ENCODE measurements at regions of chr13 and their contacts with region 1.

Region 1: DNA sequence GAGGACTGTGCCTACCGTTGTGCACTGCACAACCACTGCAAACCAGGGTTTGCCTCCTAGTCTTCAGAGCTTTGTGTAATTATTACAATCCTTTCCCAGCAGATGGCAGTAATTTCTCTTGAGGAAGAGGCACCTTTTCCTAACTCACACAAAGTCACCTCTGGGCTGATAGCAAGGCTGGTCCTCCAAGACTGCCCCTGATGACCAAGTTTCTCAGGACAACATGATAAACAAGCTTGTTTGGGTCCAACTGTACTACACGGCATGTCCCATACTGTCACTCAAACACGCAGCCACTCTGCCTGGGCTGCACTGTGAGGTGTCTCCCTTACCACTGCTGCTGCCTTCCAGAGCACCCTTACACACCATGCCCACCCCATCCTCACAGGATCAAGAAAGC is 39.3 kb downstream of the RFXAP start:
- DNase-seq: peak; percentile 68
- H3K4me3 ChIP-seq: no peak overlapping the region
- H3K27ac ChIP-seq: no peak overlapping the region
- H3K4me1 ChIP-seq: peaks cover 17% of the 10 kb centered on the region
- H3K27me3 ChIP-seq: no peaks in the 10 kb centered on the region
- CTCF ChIP-seq: peak; percentile 38 to 52
- POLR2A ChIP-seq: no peak

Region 2: GRCh38 chr13:36453516-36453915 is 404.8 kb before region 1 on chr13:
- CTCF ChIA-PET with region 1: interaction called, 17 read pairs
- POLR2A ChIA-PET with region 1: no interaction called
- dilution Hi-C with region 1: no loop called
- intact Hi-C with region 1: no loop called
- DNase-seq: peak; percentile 49
- H3K4me3 ChIP-seq: no peak overlapping the region
- H3K27ac ChIP-seq: no peak overlapping the region
- H3K4me1 ChIP-seq: no peaks in the 10 kb centered on the region
- H3K27me3 ChIP-seq: peaks cover 0 to 4% of the 10 kb centered on the region in 2 experiments
- CTCF ChIP-seq: peak; percentile 29 to 41
- POLR2A ChIP-seq: no peak

Region 3: GRCh38 chr13:36880961-36881360 is 22.7 kb after region 1 on chr13:
- CTCF ChIA-PET with region 1: interaction called, 22 read pairs
- POLR2A ChIA-PET with region 1: no interaction called
- dilution Hi-C with region 1: no loop called
- intact Hi-C with region 1: no loop called
- DNase-seq: peak; percentile 44
- H3K4me3 ChIP-seq: no peak overlapping the region
- H3K27ac ChIP-seq: no peak overlapping the region
- H3K4me1 ChIP-seq: peaks cover 8% of the 10 kb centered on the region
- H3K27me3 ChIP-seq: no peaks in the 10 kb centered on the region
- CTCF ChIP-seq: no peak
- POLR2A ChIP-seq: no peak

Region 4: DNA sequence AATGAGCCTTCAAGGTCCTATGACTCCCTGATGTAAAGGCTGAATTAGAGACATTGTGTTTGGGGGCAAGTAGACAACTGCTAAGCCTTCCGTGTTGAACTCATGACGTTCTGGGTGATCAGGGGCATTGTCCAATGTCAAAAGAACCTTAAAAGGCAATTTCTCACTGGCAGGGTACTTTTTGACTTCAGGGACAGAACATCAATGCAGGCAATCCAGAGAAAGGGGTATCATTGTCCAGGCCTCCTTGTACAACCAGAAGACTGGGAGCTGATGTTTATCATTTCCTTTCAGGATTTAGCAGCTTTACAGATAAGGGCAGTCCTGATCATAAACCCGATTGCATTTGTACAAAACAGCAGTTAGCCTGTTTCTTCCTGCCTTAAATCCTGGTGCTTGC is 86.8 kb after region 1 on chr13:
- CTCF ChIA-PET with region 1: interaction called, 12 read pairs
- POLR2A ChIA-PET with region 1: no interaction called
- dilution Hi-C with region 1: no loop called
- intact Hi-C with region 1: no loop called
- DNase-seq: peak; percentile 56
- H3K4me3 ChIP-seq: no peak overlapping the region
- H3K27ac ChIP-seq: peak overlapping the region; percentile 49
- H3K4me1 ChIP-seq: peaks cover 21% of the 10 kb centered on the region
- H3K27me3 ChIP-seq: no peaks in the 10 kb centered on the region
- CTCF ChIP-seq: no peak
- POLR2A ChIP-seq: no peak

Region 5: GRCh38 chr13:36959456-36960116 is 101.3 kb after region 1 on chr13:
- CTCF ChIA-PET with region 1: interaction called, 14 read pairs
- POLR2A ChIA-PET with region 1: no interaction called
- dilution Hi-C with region 1: no loop called
- intact Hi-C with region 1: no loop called
- DNase-seq: no peak
- H3K4me3 ChIP-seq: no peak overlapping the region
- H3K27ac ChIP-seq: no peak overlapping the region
- H3K4me1 ChIP-seq: peaks cover 12% of the 10 kb centered on the region
- H3K27me3 ChIP-seq: no peaks in the 10 kb centered on the region
- CTCF ChIP-seq: no peak
- POLR2A ChIP-seq: no peak

Region 6: DNA sequence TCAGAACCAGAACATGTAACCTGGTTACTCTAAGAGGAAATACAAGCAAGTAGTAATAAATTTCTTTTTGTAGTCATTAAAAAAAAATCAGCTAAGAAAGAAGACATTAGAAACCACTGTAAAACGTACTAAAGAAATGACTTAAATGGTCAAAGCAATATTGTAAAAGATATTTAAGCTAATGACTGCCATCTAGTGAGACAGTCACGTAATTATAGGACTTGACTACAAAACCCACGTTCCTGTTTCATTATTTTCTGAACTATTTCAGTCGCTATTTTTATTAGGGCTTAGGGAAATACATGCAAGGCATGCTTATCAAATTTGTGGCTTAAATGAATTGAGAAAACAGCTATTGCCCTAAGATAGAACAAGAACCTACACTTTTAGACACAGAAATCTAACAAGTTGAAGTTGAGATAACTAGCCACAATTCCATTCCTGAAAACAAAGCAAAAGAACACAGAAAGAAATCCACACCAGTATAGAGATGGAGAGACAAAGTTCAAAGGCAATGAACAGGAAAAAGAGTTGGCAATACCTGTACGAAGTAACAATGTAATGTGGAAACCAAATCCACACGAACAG is 123.0 kb after region 1 on chr13:
- CTCF ChIA-PET with region 1: interaction called, 359 read pairs
- POLR2A ChIA-PET with region 1: interaction called, 3 read pairs
- dilution Hi-C with region 1: loop called (anchors 25 kb)
- intact Hi-C with region 1: loop called (anchors 1 kb)
- DNase-seq: peak; percentile 75
- H3K4me3 ChIP-seq: no peak overlapping the region
- H3K27ac ChIP-seq: no peak overlapping the region
- H3K4me1 ChIP-seq: no peaks in the 10 kb centered on the region
- H3K27me3 ChIP-seq: no peaks in the 10 kb centered on the region
- CTCF ChIP-seq: peak; percentile 33 to 37
- POLR2A ChIP-seq: no peak

Region 7: GRCh38 chr13:37058910-37059847 is 200.9 kb after region 1 on chr13 and contains the start of gene SUPT20H:
- CTCF ChIA-PET with region 1: no interaction called
- POLR2A ChIA-PET with region 1: no interaction called
- dilution Hi-C with region 1: no loop called
- intact Hi-C with region 1: loop called (anchors 5 kb)
- DNase-seq: peak; percentile 93
- H3K4me3 ChIP-seq: peak within 1 kb of the TSS; percentile 81 to 82 (median 81)
- H3K27ac ChIP-seq: peak within 1 kb of the TSS; percentile 92
- H3K4me1 ChIP-seq: peaks cover 6% of the 10 kb centered on the region
- H3K27me3 ChIP-seq: no peaks in the 10 kb centered on the region
- CTCF ChIP-seq: no peak
- POLR2A ChIP-seq: peak; percentile 73
- total RNA-seq, gene SUPT20H: 65.9 and 70.7 TPM in 2 replicates